ENCODE measurements at regions of chr6 and their contacts with region 1.

Region 1: GRCh38 chr6:34248727-34249551 is at the start of gene SMIM29:
- DNase-seq: peak; percentile 96
- H3K4me3 Mint-ChIP-seq: peak within 1 kb of the TSS; percentile 87
- H3K27ac Mint-ChIP-seq: peak within 1 kb of the TSS; percentile 87
- H3K4me1 Mint-ChIP-seq: peaks cover 40% of the 10 kb centered on the region
- H3K27me3 Mint-ChIP-seq: peaks cover 1% of the 10 kb centered on the region
- total RNA-seq, gene SMIM29: 14.3 and 15.0 TPM in 2 replicates

Region 2: DNA sequence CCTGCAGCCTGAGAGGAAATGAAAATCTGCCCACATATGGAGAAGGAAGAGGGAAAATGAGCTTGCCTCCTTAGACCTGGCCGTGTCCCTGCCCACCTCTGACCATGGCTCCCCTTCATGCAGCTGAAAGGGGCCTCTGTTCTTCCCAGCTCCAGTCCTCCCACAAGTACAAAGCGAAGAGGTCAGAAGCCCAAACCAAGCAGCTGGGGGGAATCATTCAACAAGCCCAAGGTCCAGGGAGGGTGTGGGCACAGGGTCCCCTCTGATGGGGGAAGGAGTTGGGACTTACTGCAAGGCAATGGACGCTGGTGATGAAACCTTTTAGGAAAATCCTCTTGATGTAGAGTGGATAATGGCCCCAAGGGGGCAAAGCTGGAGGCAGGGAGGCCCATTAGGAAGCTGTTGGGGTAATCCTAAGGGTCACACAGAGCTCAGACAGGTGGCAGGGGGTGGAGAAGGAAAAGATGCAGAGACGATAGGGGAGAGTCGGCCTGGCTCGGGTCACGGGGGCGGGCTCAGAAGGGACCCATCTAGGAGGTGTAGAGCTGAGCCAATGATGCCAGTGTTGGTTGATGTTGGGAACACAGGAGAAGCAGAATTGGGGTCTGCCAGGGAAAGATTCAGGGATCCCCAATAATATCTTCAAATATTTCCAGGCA is 87.0 kb before region 1 on chr6:
- intact Hi-C with region 1: loop called (anchors 2 kb)
- DNase-seq: no peak
- H3K4me3 Mint-ChIP-seq: no peak overlapping the region
- H3K27ac Mint-ChIP-seq: no peak overlapping the region
- H3K4me1 Mint-ChIP-seq: no peaks in the 10 kb centered on the region
- H3K27me3 Mint-ChIP-seq: peaks cover 20% of the 10 kb centered on the region

Region 3: DNA sequence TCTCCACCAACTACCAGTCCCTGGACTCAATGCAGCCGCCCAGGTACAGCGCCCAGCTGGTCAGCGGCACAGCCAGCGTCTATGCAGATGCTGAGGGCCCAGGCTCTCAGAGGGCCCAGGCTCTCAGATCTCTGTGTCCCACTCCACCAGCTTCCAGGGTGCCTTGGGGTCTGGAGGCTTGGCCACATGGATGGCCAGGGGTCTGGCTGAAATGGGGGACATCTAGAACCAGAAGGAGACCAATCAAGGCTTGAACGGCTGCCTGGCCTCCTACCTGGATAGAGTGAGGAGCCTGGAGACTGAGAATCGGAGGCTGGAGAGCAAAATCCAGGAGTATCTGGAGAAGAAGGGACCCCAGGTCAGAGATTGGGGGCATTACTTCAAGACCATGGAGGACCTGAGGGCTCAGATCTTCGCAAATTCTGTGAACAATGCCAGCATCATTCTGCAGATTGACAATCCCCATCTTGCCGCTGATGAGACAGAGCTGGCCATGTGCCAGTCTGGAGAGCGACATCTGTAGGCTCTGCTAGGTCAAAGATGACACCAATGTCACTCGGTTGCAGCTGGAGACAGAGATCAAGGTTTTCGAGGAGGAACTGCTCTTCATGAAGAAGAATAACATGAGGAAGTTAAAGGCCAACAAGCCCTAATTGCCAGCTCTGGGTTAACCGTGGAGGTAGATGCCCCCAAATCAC is 59.0 kb before region 1 on chr6:
- intact Hi-C with region 1: no loop called
- DNase-seq: no peak
- H3K4me3 Mint-ChIP-seq: no peak overlapping the region
- H3K27ac Mint-ChIP-seq: no peak overlapping the region
- H3K4me1 Mint-ChIP-seq: no peaks in the 10 kb centered on the region
- H3K27me3 Mint-ChIP-seq: peaks cover under 1% of the 10 kb centered on the region

Region 4: GRCh38 chr6:34223956-34224940 is 24.7 kb before region 1 on chr6:
- intact Hi-C with region 1: loop called (anchors 1 kb)
- DNase-seq: peak; percentile 91
- H3K4me3 Mint-ChIP-seq: peak overlapping the region; percentile 64
- H3K27ac Mint-ChIP-seq: peak overlapping the region; percentile 76
- H3K4me1 Mint-ChIP-seq: peaks cover 28% of the 10 kb centered on the region
- H3K27me3 Mint-ChIP-seq: peaks cover 7% of the 10 kb centered on the region

Region 5: DNA sequence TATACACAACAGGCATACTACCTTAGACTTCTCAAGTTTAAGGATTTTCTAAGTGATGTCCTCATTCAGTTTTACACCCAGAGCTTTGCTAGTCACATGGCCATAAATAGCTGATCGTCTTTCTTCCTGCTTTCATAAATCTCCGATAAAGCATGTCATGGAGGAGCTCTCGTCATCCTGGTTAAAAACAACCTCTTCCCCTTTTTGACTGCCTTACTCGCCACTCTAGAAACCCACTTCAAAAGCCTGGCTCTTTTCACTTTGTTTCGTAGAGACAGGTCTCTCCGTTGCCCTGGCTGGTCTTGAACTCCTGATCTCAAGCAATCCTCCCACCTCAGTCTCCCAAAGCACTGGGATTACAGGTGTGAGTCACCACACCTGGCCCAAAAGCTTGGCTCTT is 66.8 kb after region 1 on chr6:
- intact Hi-C with region 1: loop called (anchors 5 kb)
- DNase-seq: no peak
- H3K4me3 Mint-ChIP-seq: peak overlapping the region; percentile 34
- H3K27ac Mint-ChIP-seq: no peak overlapping the region
- H3K4me1 Mint-ChIP-seq: peaks cover 50% of the 10 kb centered on the region
- H3K27me3 Mint-ChIP-seq: no peaks in the 10 kb centered on the region

Region 6: DNA sequence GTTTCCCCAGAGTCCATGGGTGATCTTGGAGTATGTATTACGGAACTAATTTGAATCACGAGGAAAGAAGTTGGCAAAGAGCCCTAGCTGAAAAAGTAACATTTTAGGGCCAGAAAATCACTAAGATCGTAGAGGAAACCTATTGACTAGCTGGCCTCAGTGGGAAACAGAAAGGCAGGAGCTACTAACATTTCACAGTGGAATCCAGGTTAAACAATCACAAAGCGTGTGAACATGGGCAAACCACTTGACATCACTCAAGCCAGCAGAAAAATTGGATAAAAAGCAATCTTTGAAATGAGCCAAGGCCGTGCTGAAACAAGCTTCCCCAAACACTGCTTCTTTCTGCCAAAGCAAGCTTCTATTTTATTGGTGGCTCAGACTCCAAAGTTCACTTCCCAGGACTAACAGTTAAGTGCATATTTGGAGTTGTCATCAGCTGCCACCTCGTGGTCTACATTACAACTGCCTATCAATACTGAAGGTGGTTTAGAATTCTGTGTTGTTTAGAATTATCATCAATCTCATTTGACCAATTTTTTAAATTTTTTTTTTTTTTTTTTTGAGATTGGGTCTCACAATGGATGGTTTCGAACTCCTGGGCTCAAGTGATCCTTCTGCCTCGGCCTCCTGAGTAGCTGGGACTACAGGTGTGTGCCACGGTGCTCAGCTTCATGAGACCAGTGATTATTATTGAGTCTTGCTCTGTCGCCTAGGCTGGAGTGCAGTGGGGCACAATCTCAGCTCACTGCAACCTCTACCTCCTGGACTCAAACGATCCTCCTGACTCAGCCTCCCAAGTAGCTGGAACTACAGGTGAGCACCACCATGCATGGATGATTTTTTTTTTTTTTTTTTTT is 166.3 kb after region 1 on chr6:
- intact Hi-C with region 1: loop called (anchors 1 kb)
- DNase-seq: peak; percentile 9
- H3K4me3 Mint-ChIP-seq: no peak overlapping the region
- H3K27ac Mint-ChIP-seq: no peak overlapping the region
- H3K4me1 Mint-ChIP-seq: peaks cover 34% of the 10 kb centered on the region
- H3K27me3 Mint-ChIP-seq: no peaks in the 10 kb centered on the region

Region 7: GRCh38 chr6:34526992-34527728 is 278.2 kb after region 1 on chr6:
- intact Hi-C with region 1: loop called (anchors 2 kb)
- DNase-seq: peak; percentile 91
- H3K4me3 Mint-ChIP-seq: peak overlapping the region; percentile 6
- H3K27ac Mint-ChIP-seq: no peak overlapping the region
- H3K4me1 Mint-ChIP-seq: no peaks in the 10 kb centered on the region
- H3K27me3 Mint-ChIP-seq: peaks cover 6% of the 10 kb centered on the region

Measured in activated T-helper 1 cell treated with anti-CD3 and anti-CD28 coated beads, Interleukin-12 subunit alpha, Interleukin-12 subunit beta, Interleukin-2, Interleukin-4 antibody, amounts not matched to agents 30 ng/mL and 10 ng/mL and 1 ng/mL, durations not matched to agents 14 hours and 24 hours and 36 hours (primary cell).